Activated CD4-positive, alpha-beta memory T cell treated with anti-CD3 and anti-CD28 coated beads for 36 hours (primary cell): ENCODE measurements at regions of chr4 and their contacts with region 1.

Region 1: DNA sequence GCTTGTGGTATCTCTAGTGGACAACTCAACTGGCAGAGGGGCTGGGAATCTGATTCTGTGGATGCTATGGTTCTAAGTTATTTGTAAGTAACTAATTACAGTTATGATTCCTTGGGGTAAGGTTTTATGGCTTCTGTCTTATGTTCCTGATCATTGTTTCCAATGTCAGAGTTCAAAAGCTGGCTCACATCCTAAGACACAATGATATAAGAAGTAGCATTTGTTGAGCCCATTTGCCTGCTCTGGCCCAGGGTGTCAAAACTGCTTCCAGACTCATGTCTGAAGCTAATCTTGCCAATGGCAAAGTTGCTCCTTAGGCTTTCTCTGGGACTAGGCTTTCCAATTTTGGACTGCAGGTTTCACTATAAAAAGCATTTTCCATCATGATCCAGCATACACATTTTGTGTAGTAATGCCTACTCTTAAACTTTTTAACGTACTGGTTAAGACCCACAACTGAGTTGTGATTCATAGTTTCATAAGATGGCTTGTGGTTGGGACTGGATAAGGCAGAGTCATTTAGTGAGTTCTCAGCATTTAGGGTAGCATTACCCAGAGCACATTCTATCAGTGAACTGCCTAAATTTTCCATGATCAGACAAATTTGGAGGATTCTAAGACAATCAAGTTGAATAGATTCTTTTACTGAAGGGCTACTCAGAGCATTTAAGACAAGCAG is 50.0 kb downstream of the CCNI start:
- DNase-seq: no peak
- H3K4me3 Mint-ChIP-seq: no peak overlapping the region
- H3K27ac Mint-ChIP-seq: peak overlapping the region; percentile 62
- H3K4me1 Mint-ChIP-seq: peaks cover 43% of the 10 kb centered on the region
- H3K27me3 Mint-ChIP-seq: no peaks in the 10 kb centered on the region

Region 2: DNA sequence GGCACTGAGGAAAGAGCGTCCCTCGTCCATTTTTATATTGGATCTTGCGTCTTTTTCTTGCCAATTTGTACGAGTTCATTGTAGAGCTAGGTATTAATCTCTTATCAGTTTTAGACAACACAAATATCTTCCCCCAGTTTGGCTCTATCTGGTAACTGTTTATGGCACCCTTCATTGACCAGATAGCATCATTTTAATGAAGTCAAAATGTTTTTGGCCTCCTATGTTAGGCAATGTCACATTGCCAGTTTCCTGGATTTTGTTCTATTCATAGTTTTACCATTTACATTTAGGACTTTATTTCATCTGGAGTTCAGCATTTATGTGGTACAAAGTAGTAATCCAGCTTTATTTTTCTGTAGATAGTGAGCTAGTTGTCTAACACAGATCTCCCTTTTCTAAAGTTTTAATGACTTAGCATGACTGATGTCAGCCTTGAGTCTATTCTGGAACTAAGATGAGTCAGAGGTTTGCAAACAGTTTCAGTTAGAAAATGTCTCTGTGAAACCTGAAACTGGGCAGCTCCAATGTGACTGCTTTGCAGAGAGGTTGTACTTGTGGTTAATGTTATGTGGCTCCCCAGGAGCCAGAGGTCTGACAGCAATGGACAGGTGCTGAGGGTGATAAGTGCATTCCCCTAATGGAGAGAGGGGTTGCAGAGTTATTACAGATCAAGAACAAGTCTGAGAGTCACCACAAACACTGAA is 724.6 kb before region 1 on chr4:
- CTCF ChIA-PET with region 1: no interaction called
- POLR2A ChIA-PET with region 1: no interaction called
- intact Hi-C with region 1: loop called (anchors 1 kb)
- DNase-seq: peak; percentile 66
- H3K4me3 Mint-ChIP-seq: no peak overlapping the region
- H3K27ac Mint-ChIP-seq: no peak overlapping the region
- H3K4me1 Mint-ChIP-seq: peaks cover 35% of the 10 kb centered on the region
- H3K27me3 Mint-ChIP-seq: peaks cover 3% of the 10 kb centered on the region

Region 3: DNA sequence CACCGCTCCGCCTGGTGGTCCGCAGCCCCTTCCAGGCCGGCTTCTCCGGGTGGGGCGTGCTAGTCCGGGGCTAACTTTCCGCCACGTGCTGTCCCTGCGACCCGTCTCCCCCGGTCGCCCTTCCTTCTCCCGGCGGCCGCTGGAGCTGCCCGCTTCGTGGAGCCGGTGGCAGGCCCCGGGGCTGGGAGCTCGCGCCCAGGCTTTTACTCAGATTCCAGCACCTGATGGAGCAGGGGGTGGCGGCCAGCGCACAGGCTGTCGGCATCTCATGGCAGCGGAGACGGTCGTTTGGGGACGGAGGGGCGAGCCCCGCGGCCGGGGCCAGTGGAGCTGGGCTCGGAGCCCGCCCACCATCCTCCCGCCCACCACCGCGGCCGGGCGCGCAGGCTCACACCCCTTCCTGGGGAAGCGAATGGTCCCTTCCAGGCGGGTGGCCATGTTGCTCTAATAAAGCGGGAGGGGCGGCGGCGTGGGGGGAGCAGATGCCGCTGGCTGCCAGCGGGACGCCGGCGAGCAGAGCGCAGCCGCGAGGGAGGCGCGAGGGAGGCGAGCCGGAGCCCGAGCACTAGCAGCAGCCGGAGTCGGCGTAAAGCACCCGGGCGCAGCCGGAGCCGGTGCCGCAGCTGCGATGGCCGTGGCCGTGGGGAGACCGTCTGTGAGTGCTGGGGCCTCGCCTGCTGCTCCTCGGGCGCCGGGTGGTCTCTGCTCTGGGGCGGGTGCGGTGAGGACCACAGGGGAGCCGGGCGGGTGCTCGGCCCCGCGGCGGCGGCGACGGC is 76.3 kb before region 1 on chr4 and contains the start of gene SEPTIN11:
- CTCF ChIA-PET with region 1: no interaction called
- POLR2A ChIA-PET with region 1: interaction called, 3 read pairs
- intact Hi-C with region 1: loop called (anchors 1 kb)
- DNase-seq: peak; percentile 84
- H3K4me3 Mint-ChIP-seq: peak within 1 kb of the TSS; percentile 81
- H3K27ac Mint-ChIP-seq: peak within 1 kb of the TSS; percentile 51
- H3K4me1 Mint-ChIP-seq: peaks cover 12% of the 10 kb centered on the region
- H3K27me3 Mint-ChIP-seq: peaks cover 18% of the 10 kb centered on the region
- total RNA-seq, gene SEPTIN11: 28.3 to 33.6 TPM

Region 4: GRCh38 chr4:76993787-76994641 is 31.8 kb before region 1 on chr4:
- CTCF ChIA-PET with region 1: no interaction called
- POLR2A ChIA-PET with region 1: no interaction called
- intact Hi-C with region 1: loop called (anchors 1 kb)
- DNase-seq: peak; percentile 73
- H3K4me3 Mint-ChIP-seq: peak overlapping the region; percentile 11
- H3K27ac Mint-ChIP-seq: no peak overlapping the region
- H3K4me1 Mint-ChIP-seq: peaks cover 53% of the 10 kb centered on the region
- H3K27me3 Mint-ChIP-seq: peaks cover 5% of the 10 kb centered on the region

Region 5: GRCh38 chr4:77110730-77111129 is 84.9 kb after region 1 on chr4:
- CTCF ChIA-PET with region 1: no interaction called
- POLR2A ChIA-PET with region 1: no interaction called
- intact Hi-C with region 1: no loop called
- DNase-seq: no peak
- H3K4me3 Mint-ChIP-seq: no peak overlapping the region
- H3K27ac Mint-ChIP-seq: no peak overlapping the region
- H3K4me1 Mint-ChIP-seq: no peaks in the 10 kb centered on the region
- H3K27me3 Mint-ChIP-seq: peaks cover 9% of the 10 kb centered on the region

Region 6: GRCh38 chr4:77156533-77156911 is 130.7 kb after region 1 on chr4:
- CTCF ChIA-PET with region 1: no interaction called
- POLR2A ChIA-PET with region 1: no interaction called
- intact Hi-C with region 1: loop called (anchors 1 kb)
- DNase-seq: peak; percentile 97
- H3K4me3 Mint-ChIP-seq: peak overlapping the region; percentile 95
- H3K27ac Mint-ChIP-seq: peak overlapping the region; percentile 94
- H3K4me1 Mint-ChIP-seq: peaks cover 27% of the 10 kb centered on the region
- H3K27me3 Mint-ChIP-seq: no peaks in the 10 kb centered on the region

Region 7: DNA sequence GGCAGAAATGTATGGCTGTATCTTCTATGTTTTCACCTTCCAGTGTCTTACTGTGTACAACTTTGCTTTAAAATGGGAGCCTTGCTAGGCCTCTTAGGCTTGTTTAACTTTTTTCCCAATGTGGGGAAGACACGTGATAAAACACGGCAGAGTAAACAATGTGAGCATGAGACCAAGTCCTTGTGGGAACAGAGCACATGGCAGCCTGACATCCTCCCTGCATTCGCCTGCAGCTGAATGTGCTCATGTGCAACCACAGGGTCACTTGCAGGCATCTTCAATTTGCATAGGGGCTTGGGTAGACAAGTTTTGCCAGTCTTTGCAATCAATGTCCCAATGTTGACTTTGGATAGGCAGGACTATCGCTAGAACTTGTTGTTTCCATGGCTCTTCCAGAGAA is 223.0 kb after region 1 on chr4:
- CTCF ChIA-PET with region 1: no interaction called
- POLR2A ChIA-PET with region 1: no interaction called
- intact Hi-C with region 1: no loop called
- DNase-seq: no peak
- H3K4me3 Mint-ChIP-seq: no peak overlapping the region
- H3K27ac Mint-ChIP-seq: no peak overlapping the region
- H3K4me1 Mint-ChIP-seq: no peaks in the 10 kb centered on the region
- H3K27me3 Mint-ChIP-seq: peaks cover 8% of the 10 kb centered on the region